Left cardiac atrium (tissue), 4 donors: ENCODE measurements at regions of chr2 and their contacts with region 1.

Region 1: DNA sequence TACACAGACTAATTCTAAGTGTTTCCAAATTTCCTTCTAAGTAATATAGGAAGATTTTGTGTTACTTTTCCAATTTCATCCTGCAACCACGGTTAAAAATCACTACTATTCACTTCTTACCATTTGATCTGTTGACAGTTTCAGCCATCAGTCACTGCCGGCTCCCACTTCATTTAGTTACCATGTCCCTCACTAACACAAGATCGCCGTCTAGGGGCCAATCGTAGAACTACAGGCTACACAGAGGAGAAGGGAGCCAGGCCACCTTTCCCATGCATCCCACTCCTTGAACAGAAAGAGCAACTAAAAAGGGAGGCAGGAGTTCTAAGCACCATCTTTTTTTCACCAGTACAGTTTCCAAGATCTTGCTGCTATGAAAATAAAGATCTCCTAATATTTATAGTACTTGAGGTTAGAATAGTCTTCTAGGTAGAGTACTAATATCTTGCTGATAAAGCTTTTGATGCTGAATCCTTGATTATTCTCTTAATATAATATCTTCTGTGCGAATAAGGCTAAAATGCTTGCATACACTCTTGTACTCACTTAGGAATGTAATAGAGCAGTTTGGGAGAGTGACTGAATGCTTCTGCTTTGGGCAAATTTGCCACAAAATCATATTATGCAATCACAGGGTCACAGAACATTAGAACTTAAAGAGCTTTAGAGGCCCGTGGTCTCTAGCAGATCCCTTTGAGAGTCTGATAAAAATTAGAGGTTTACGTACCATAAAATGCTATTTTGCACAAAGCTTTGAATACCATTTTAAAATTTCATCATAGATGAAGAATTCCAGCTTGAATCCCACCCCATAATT is 39.5 kb upstream of the CYP1B1 start:
- DNase-seq: peak; percentile 85
- ATAC-seq: peak; percentile 64 to 83

Region 2: GRCh38 chr2:37877457-37878315 is 237.7 kb before region 1 on chr2:
- intact Hi-C with region 1: no loop called
- DNase-seq: no peak
- ATAC-seq: peak; percentile 68 to 77

Region 3: GRCh38 chr2:37982147-37982582 is 133.3 kb before region 1 on chr2:
- intact Hi-C with region 1: loop called in 1 of 2 experiments (anchors 1 kb)
- DNase-seq: peak; percentile 80
- ATAC-seq: peak; percentile 23 to 34